H1 (cell line): ENCODE measurements at regions of chr2 and their contacts with region 1.

Region 1: GRCh38 chr2:9770308-9771100 is 72.8 kb upstream of the TAF1B start:
- DNase-seq: peak; percentile 68 to 81
- H3K4me3 ChIP-seq: no peak overlapping the region
- H3K27ac ChIP-seq: no peak overlapping the region; the same call in 1 of the 2 replicates
- H3K4me1 ChIP-seq: peaks cover 0 to 29% (median 22%) of the 10 kb centered on the region in 4 experiments; a peak in 6 of 7 replicates
- H3K27me3 ChIP-seq: peaks cover 0 to 2% (median under 1%) of the 10 kb centered on the region in 4 experiments; a peak in 1 of 7 replicates
- CTCF ChIP-seq: peak in 2 of 3 experiments; percentile 85 to 88; a peak in 3 of 4 replicates
- EP300 ChIP-seq: no peak
- POLR2A ChIP-seq: no peak
- RAD21 ChIP-seq: peak; percentile 64 to 69

Region 2: DNA sequence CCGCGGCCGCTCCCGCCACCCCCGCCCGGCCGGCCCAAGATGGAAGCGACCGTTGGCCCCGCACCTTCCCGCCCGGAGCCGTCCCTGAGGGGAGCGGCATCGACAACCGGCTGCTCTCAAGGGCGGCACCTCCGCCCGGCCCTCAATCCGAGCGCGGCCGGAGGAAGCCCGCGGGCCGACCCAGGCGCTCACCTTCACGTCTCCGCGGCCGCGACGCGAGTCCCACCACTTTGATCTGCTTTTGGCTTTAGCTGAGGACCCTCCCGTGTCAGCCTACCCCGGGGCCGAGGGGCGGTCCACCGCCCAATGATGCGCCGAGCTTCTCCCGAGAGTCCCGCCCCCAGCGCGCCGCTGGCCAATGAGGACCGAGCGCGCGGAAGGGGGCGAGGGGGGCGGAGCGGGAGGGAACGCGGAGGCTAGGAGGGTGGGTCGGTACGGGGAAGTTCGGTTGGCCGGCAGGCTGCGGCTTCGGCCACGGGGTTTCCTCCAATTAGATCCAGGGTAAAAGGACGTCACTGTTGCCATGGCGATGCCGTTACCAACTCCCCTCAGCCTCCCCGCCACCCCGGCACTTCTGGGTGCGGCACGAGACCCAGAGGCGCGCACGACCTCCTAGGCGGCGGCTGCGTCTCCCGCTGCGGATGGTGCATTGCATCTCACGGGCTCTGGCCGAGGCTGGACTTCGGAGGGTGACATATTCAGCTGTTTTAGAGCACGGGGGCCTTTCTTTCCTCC is 139.6 kb before region 1 on chr2 and contains the start of gene YWHAQ:
- CTCF ChIA-PET with region 1: interaction called, 13 read pairs
- POLR2A ChIA-PET with region 1: interaction called, 7 read pairs
- DNase-seq: peak; percentile 95 to 97
- H3K4me3 ChIP-seq: peak within 1 kb of the TSS; percentile 93 to 100 (median 97)
- H3K27ac ChIP-seq: peak within 1 kb of the TSS; percentile 97
- H3K4me1 ChIP-seq: peaks cover 0 to 13% (median 3%) of the 10 kb centered on the region in 4 experiments; a peak in 4 of 7 replicates
- H3K27me3 ChIP-seq: peaks cover 0 to 15% (median 8%) of the 10 kb centered on the region in 4 experiments; a peak in 3 of 7 replicates
- CTCF ChIP-seq: no peak
- EP300 ChIP-seq: peak in 1 of 2 experiments; percentile 78; a peak in 1 of 3 replicates
- POLR2A ChIP-seq: peak; percentile 97 to 98
- RAD21 ChIP-seq: no peak
- total RNA-seq, gene YWHAQ: 468 and 480 TPM in 2 replicates

Region 3: DNA sequence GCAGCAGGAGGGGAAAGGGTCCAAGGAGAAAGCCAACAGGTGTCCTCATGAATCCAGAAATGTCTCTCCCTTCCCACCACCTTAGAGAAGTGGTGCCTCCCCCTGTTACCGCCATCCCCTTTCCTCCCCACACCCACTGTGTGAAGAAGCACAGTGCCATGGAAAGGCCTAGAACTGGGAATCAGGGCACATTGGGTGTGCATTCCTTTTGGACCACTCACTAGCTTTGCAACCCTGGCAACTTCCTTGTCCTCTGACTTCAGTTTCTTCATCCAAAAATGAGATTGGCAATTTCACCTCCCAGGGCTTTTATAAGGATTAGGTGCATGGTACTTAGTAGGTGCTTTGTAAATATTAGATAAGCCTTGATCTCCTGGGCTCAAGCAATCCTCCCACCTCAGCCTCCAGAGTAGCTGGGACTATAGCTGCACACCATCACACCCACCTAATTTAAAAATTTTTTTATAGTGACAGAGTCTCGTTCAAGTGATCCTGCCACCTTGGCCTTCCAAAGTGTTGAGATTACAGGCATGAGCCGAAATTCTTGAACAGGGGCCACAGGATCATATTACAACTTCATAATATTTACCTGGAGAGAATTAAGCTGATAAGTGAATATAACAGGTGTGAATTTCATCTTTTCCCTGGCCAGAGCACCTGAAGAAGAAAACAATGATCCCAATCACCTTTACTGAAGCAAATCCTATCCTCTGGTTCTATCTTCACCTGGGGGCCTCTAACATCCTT is 25.2 kb before region 1 on chr2:
- CTCF ChIA-PET with region 1: interaction called, 13 read pairs
- POLR2A ChIA-PET with region 1: no interaction called
- DNase-seq: no peak
- H3K4me3 ChIP-seq: no peak overlapping the region
- H3K27ac ChIP-seq: no peak overlapping the region
- H3K4me1 ChIP-seq: no peaks in the 10 kb centered on the region; a peak in 1 of 7 replicates
- H3K27me3 ChIP-seq: no peaks in the 10 kb centered on the region
- CTCF ChIP-seq: no peak
- EP300 ChIP-seq: no peak
- POLR2A ChIP-seq: no peak
- RAD21 ChIP-seq: no peak

Region 4: DNA sequence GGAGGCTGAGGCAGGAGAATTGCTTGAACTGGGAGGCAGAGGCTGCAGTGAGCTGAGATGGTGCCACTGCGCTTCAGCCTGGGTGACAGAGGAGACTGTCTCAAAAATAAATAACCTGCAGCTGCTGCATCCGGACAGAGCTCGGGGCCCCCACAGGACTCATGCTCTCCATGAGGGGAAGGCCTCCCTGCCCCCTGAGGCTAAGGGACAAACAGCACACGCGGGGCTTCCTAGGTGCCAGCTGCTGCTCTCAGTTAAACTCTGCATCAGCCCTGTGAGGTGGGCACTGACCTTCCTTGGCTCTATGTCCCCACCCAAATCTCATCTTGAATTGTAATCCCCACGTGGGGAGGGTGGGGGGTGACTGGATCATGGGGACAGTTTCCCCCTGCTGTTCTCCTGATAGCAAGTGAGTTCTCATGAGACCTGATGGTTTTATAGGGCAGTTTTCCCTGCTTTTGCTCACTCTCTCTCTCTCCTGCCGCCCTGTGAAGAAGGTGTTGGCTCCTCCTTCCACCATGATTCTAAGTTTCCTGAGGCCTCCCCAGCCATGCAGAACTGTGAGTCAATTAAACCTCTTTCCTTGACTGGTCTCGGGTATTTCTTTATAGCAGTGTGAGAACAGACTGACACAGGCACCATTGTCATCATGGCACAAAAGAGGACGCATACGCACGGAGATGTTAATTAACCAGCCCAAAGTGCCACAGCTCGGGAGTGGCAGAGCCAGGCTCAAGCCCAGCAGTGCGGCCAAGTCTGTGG is 22.8 kb after region 1 on chr2:
- CTCF ChIA-PET with region 1: interaction called, 52 read pairs
- POLR2A ChIA-PET with region 1: no interaction called
- DNase-seq: no peak
- H3K4me3 ChIP-seq: no peak overlapping the region
- H3K27ac ChIP-seq: no peak overlapping the region
- H3K4me1 ChIP-seq: peaks cover 0 to 4% (median under 1%) of the 10 kb centered on the region in 4 experiments; a peak in 3 of 7 replicates
- H3K27me3 ChIP-seq: no peaks in the 10 kb centered on the region
- CTCF ChIP-seq: no peak
- EP300 ChIP-seq: no peak
- POLR2A ChIP-seq: no peak
- RAD21 ChIP-seq: no peak

Region 5: DNA sequence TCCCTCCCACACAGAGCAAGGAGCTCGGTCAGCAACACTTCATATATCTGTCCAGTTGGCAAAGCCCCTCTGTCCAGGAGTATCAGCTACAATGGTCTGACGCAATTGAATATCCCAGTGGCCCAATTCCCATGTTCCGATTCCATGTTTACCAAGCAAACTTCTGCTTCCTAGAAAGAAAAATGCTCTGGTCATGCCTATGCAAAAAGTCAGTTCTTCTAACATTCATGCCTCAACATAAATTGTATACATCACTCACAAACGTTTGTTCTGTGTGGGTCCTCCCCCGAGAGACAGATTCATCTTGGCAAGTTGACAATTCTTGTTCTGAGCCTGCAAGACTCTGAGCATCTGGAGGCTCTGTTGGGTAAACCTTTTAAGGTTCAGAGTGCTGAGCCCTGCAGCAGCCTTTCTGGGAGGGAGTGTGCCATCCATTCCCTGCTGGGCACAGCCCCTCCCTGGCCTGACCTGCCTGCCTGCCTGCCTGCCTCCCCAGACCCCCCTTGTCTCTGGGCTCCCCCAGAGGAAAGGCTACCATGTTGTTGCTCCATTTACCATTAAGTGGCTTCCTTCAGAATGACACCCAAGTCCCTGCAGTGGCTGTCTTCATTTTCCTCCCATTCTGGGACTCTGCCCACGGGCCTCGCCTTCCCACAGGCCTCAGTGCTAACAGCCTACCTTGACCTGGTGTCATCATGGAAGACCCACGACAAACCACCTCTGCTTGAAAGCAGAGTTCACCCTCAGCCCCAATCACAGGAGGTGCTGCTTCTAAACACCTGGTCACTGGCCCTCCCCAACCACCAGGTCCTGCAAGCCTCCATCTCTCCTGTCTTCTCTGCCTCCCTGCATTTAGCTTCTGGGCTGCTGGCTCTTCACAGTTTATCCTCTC is 35.2 kb after region 1 on chr2:
- CTCF ChIA-PET with region 1: interaction called, 50 read pairs
- POLR2A ChIA-PET with region 1: no interaction called
- DNase-seq: no peak
- H3K4me3 ChIP-seq: no peak overlapping the region
- H3K27ac ChIP-seq: no peak overlapping the region
- H3K4me1 ChIP-seq: peaks cover 0 to 4% (median 1%) of the 10 kb centered on the region in 4 experiments; a peak in 2 of 7 replicates
- H3K27me3 ChIP-seq: no peaks in the 10 kb centered on the region
- CTCF ChIP-seq: no peak
- EP300 ChIP-seq: no peak
- POLR2A ChIP-seq: no peak
- RAD21 ChIP-seq: no peak

Region 6: GRCh38 chr2:10043906-10044601 is 273.6 kb after region 1 on chr2:
- CTCF ChIA-PET with region 1: interaction called, 20 read pairs
- POLR2A ChIA-PET with region 1: no interaction called
- DNase-seq: peak in 1 of 2 experiments; percentile 89
- H3K4me3 ChIP-seq: peak overlapping the region in 2 of 4 experiments; percentile 61; a peak in 4 of 8 replicates
- H3K27ac ChIP-seq: peak overlapping the region; percentile 58; the same call in 1 of the 2 replicates
- H3K4me1 ChIP-seq: peaks cover 0 to 5% (median 2%) of the 10 kb centered on the region in 4 experiments; a peak in 3 of 7 replicates
- H3K27me3 ChIP-seq: peaks cover 0 to 26% (median 18%) of the 10 kb centered on the region in 4 experiments; a peak in 6 of 7 replicates
- CTCF ChIP-seq: no peak
- EP300 ChIP-seq: no peak
- POLR2A ChIP-seq: no peak
- RAD21 ChIP-seq: no peak